ENCODE measurements at regions of chr20 and their contacts with region 1.

Region 1: GRCh38 chr20:35741892-35742740 is at the start of gene RBM39:
- DNase-seq: peak; percentile 100
- ATAC-seq: peak; percentile 87
- H3K4me3 ChIP-seq: peak within 1 kb of the TSS; percentile 96
- H3K27ac ChIP-seq: peak within 1 kb of the TSS; percentile 99
- H3K4me1 ChIP-seq: peaks cover 5% of the 10 kb centered on the region
- H3K27me3 ChIP-seq: no peaks in the 10 kb centered on the region
- CTCF ChIP-seq: peak; percentile 12 to 29 (median 18); a peak in 3 of 6 replicates
- EP300 ChIP-seq: 0 out of 4 replicates have a peak, but pooled peaks of 1 of the 2 experiments have one; percentile 46
- POLR2A ChIP-seq: peak; percentile 92
- RAD21 ChIP-seq: no peak
- polyA plus RNA-seq, gene RBM39: 135 to 150 TPM

Region 2: GRCh38 chr20:35583636-35584560 is 158.2 kb before region 1 on chr20:
- CTCF ChIA-PET with region 1: no interaction called
- POLR2A ChIA-PET with region 1: no interaction called
- RAD21 ChIA-PET with region 1: no interaction called
- SMC1A ChIA-PET with region 1: no interaction called
- in situ Hi-C with region 1: no loop called
- intact Hi-C with region 1: no loop called
- DNase-seq: no peak
- ATAC-seq: no peak; the same call in 1 of the 3 replicates
- H3K4me3 ChIP-seq: no peak overlapping the region
- H3K27ac ChIP-seq: no peak overlapping the region
- H3K4me1 ChIP-seq: no peaks in the 10 kb centered on the region
- H3K27me3 ChIP-seq: no peaks in the 10 kb centered on the region
- CTCF ChIP-seq: no peak
- EP300 ChIP-seq: no peak
- POLR2A ChIP-seq: no peak
- RAD21 ChIP-seq: no peak

Region 3: GRCh38 chr20:35664544-35665221 is 77.4 kb before region 1 on chr20 and contains the starts of genes CPNE1 and RBM12:
- CTCF ChIA-PET with region 1: interaction called, 3 read pairs
- POLR2A ChIA-PET with region 1: interaction called, 13 read pairs
- RAD21 ChIA-PET with region 1: interaction called, 8 read pairs
- SMC1A ChIA-PET with region 1: interaction called, 4 read pairs
- in situ Hi-C with region 1: no loop called
- intact Hi-C with region 1: loop called (anchors 2 kb)
- DNase-seq: peak; percentile 79
- ATAC-seq: peak; percentile 87
- H3K4me3 ChIP-seq: peak within 1 kb of the TSS; percentile 87
- H3K27ac ChIP-seq: peak within 1 kb of the TSS; percentile 87
- H3K4me1 ChIP-seq: peaks cover 10% of the 10 kb centered on the region
- H3K27me3 ChIP-seq: no peaks in the 10 kb centered on the region
- CTCF ChIP-seq: no peak
- EP300 ChIP-seq: no peak
- POLR2A ChIP-seq: peak; percentile 99
- RAD21 ChIP-seq: no peak
- polyA plus RNA-seq, gene CPNE1: 85.7 to 127 TPM
- polyA plus RNA-seq, gene RBM12: 4.7 to 11.4 TPM

Region 4: GRCh38 chr20:35699127-35699975 is 42.8 kb before region 1 on chr20 and contains the starts of genes NFS1 and ROMO1:
- CTCF ChIA-PET with region 1: interaction called, 7 read pairs
- POLR2A ChIA-PET with region 1: interaction called, 20 read pairs
- RAD21 ChIA-PET with region 1: interaction called, 6 read pairs
- SMC1A ChIA-PET with region 1: interaction called, 4 read pairs
- in situ Hi-C with region 1: no loop called
- intact Hi-C with region 1: no loop called
- DNase-seq: peak; percentile 36
- ATAC-seq: peak; percentile 93
- H3K4me3 ChIP-seq: peak within 1 kb of the TSS; percentile 71
- H3K27ac ChIP-seq: peak within 1 kb of the TSS; percentile 87
- H3K4me1 ChIP-seq: peaks cover 11% of the 10 kb centered on the region; the same call in 1 of the 2 replicates
- H3K27me3 ChIP-seq: no peaks in the 10 kb centered on the region
- CTCF ChIP-seq: peak; percentile 13 to 24 (median 18); a peak in 3 of 6 replicates
- EP300 ChIP-seq: no peak
- POLR2A ChIP-seq: peak; percentile 90
- RAD21 ChIP-seq: no peak
- polyA plus RNA-seq, gene NFS1: 9.2 to 17.8 TPM
- polyA plus RNA-seq, gene ROMO1: 565 to 631 TPM

Region 5: GRCh38 chr20:35771689-35772562 is 29.8 kb after region 1 on chr20 and contains the start of gene PHF20:
- CTCF ChIA-PET with region 1: interaction called, 69 read pairs
- POLR2A ChIA-PET with region 1: interaction called, 214 read pairs
- RAD21 ChIA-PET with region 1: interaction called, 157 read pairs
- SMC1A ChIA-PET with region 1: interaction called, 151 read pairs
- in situ Hi-C with region 1: no loop called
- intact Hi-C with region 1: loop called (anchors 1 kb)
- DNase-seq: peak; percentile 87
- ATAC-seq: peak; percentile 88
- H3K4me3 ChIP-seq: peak within 1 kb of the TSS; percentile 92
- H3K27ac ChIP-seq: peak within 1 kb of the TSS; percentile 79
- H3K4me1 ChIP-seq: peaks cover 33% of the 10 kb centered on the region
- H3K27me3 ChIP-seq: no peaks in the 10 kb centered on the region
- CTCF ChIP-seq: no peak
- EP300 ChIP-seq: peak; percentile 16 to 24; a peak in 1 of 4 replicates
- POLR2A ChIP-seq: peak; percentile 90
- RAD21 ChIP-seq: no peak
- polyA plus RNA-seq, gene PHF20: 90.7 to 91.2 TPM

Region 6: GRCh38 chr20:35954200-35954906 is 212.2 kb after region 1 on chr20 and contains the start of gene SCAND1:
- CTCF ChIA-PET with region 1: interaction called, 23 read pairs
- POLR2A ChIA-PET with region 1: interaction called, 40 read pairs
- RAD21 ChIA-PET with region 1: interaction called, 33 read pairs
- SMC1A ChIA-PET with region 1: interaction called, 17 read pairs
- in situ Hi-C with region 1: no loop called
- intact Hi-C with region 1: loop called (anchors 2 kb)
- DNase-seq: peak; percentile 93
- ATAC-seq: peak; percentile 92
- H3K4me3 ChIP-seq: peak within 1 kb of the TSS; percentile 91
- H3K27ac ChIP-seq: peak within 1 kb of the TSS; percentile 96
- H3K4me1 ChIP-seq: peaks cover 3% of the 10 kb centered on the region
- H3K27me3 ChIP-seq: no peaks in the 10 kb centered on the region
- CTCF ChIP-seq: peak; percentile 93 to 99 (median 99)
- EP300 ChIP-seq: peak in 1 of 2 experiments; percentile 52; a peak in 1 of 4 replicates
- POLR2A ChIP-seq: peak; percentile 95
- RAD21 ChIP-seq: peak; percentile 20; the same call in 1 of the 2 replicates
- polyA plus RNA-seq, gene SCAND1: 0.08 to 0.16 TPM

Region 7: GRCh38 chr20:36043892-36044515 is 301.9 kb after region 1 on chr20:
- CTCF ChIA-PET with region 1: no interaction called
- POLR2A ChIA-PET with region 1: no interaction called
- RAD21 ChIA-PET with region 1: no interaction called
- SMC1A ChIA-PET with region 1: no interaction called
- in situ Hi-C with region 1: no loop called
- intact Hi-C with region 1: no loop called
- DNase-seq: no peak
- ATAC-seq: no peak
- H3K4me3 ChIP-seq: no peak overlapping the region
- H3K27ac ChIP-seq: no peak overlapping the region
- H3K4me1 ChIP-seq: no peaks in the 10 kb centered on the region
- H3K27me3 ChIP-seq: no peaks in the 10 kb centered on the region
- CTCF ChIP-seq: no peak
- EP300 ChIP-seq: no peak
- POLR2A ChIP-seq: no peak
- RAD21 ChIP-seq: no peak

Measured in GM12878 (cell line).